Activated naive CD8-positive, alpha-beta T cell treated with anti-CD3 and anti-CD28 coated beads, Interleukin-2, amount 10 ng/mL, durations not matched to agents 7 days and 5 days (primary cell): ENCODE measurements at regions of chrX and their contacts with region 1.

Region 1: GRCh38 chrX:71181910-71182799 is 37.5 kb downstream of the NLGN3 start:
- DNase-seq: peak; percentile 69
- ATAC-seq: peak; percentile 94
- H3K4me3 Mint-ChIP-seq: peak overlapping the region; percentile 90
- H3K27ac Mint-ChIP-seq: peak overlapping the region; percentile 97
- H3K4me1 Mint-ChIP-seq: peaks cover 16% of the 10 kb centered on the region
- H3K27me3 Mint-ChIP-seq: no peaks in the 10 kb centered on the region

Region 2: DNA sequence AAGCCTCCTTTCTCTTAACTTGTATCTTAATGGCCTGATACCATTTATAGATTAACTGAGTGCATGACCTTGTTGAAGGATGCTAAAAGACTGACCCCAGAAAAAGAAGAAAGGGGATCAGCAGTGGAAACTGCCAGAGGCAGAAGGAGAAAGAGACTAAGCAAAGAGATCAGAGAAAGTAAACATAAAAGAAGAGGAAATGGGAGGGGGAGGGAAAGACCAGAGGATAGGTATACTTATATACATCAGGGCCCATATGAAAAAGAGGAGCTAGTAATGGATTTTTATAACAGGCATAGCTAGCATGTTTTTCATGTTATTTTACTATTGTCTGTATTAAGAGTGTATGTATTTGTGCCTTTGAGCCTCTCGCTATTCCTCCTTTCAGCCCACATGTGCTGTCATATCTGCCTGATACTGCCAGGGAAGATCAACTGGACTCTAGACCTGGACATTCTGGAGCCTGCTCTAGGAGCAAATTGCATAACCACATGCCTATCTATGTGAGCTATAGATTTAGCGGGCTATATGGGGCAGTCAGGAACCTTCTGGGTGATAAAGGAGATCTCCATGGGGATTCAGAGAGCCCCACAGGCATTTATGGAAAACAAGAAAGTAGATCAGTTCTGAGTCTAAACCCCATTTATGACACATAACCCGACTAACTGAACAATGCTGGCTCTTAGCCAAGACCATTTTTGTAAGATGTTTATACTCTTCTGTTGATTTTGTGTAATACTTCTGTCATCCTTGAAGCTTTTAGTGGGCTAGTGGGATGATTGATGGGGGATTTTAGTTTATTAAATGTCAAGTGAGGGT is 100.6 kb before region 1 on chrX:
- POLR2A ChIA-PET with region 1: no interaction called
- DNase-seq: no peak
- ATAC-seq: no peak
- H3K4me3 Mint-ChIP-seq: no peak overlapping the region
- H3K27ac Mint-ChIP-seq: no peak overlapping the region
- H3K4me1 Mint-ChIP-seq: peaks cover 3% of the 10 kb centered on the region
- H3K27me3 Mint-ChIP-seq: no peaks in the 10 kb centered on the region

Region 3: DNA sequence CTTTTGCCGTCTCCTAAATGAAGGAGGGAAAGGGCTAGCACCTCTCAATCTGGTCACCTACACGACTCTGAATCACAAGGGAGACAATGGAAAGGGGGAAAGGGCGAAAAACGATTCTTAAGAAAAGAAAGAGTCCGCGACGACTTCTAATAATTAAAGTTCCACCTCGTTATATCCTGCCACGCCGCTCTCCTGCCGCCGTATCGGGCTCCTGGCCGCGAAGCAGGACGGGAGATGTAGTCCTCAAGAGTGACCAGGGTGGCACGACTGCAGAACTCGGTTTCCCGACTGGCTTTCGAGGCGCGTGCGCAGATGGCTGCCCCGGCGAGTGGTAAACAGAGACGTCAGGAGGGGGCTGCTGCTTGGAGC is 86.6 kb before region 1 on chrX and contains the start of gene FOXO4:
- POLR2A ChIA-PET with region 1: no interaction called
- DNase-seq: peak; percentile 85
- ATAC-seq: peak; percentile 92
- H3K4me3 Mint-ChIP-seq: peak within 1 kb of the TSS; percentile 90
- H3K27ac Mint-ChIP-seq: peak within 1 kb of the TSS; percentile 89
- H3K4me1 Mint-ChIP-seq: peaks cover 20% of the 10 kb centered on the region
- H3K27me3 Mint-ChIP-seq: no peaks in the 10 kb centered on the region
- total RNA-seq, gene FOXO4: 22.1 to 24.9 TPM

Region 4: GRCh38 chrX:71111141-71111843 is 70.9 kb before region 1 on chrX and contains the start of gene IL2RG:
- POLR2A ChIA-PET with region 1: interaction called, 17 read pairs
- DNase-seq: peak; percentile 53
- ATAC-seq: peak; percentile 80
- H3K4me3 Mint-ChIP-seq: peak within 1 kb of the TSS; percentile 99
- H3K27ac Mint-ChIP-seq: peak within 1 kb of the TSS; percentile 95
- H3K4me1 Mint-ChIP-seq: peaks cover 30% of the 10 kb centered on the region
- H3K27me3 Mint-ChIP-seq: no peaks in the 10 kb centered on the region
- total RNA-seq, gene IL2RG: 389 to 395 TPM

Region 5: DNA sequence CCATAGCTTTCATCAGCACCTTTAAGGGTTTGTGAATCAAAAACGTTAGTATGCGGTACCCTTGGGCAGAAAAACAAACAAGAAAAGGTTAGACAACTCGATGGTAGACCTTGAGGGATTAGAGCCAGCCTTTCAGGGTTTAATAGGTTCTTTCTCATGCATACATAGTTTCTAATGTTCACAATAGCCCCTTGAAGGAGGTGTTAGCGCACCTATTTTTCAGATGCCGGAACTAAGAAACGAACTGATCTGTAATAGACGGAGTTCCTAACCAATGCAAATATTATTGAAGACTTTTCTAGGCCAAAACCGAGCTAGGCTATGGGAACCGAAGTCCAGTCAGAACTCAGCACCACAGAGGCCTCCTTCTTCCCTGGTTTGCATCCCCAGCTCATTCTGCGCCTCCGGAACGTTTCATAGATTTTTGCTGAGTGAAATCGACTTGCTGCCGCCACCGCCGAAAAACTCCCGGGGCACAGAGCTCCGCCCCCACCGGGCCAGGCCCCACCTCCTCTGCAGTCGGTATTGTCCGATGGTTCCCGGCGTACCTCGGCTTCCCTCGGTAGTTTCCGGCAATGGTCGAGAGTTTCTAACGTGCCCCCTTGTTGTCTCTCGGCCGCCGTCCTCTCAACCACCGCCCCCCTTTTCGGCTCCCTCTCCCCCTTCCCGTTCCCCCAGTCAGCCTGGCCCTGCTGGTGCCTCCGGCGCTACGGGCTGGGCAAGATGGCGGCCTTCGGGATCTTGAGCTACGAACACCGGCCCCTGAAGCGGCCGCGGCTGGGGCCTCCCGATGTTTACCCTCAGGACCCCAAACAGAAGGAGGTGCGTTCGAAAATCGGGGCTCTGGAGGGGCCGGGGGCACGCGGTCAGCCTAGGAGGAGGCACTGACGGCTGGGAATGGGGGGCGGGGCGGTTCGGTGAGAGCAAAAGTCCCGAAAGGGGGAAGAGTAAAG is 63.8 kb before region 1 on chrX and contains the start of gene MED12:
- POLR2A ChIA-PET with region 1: interaction called, 10 read pairs
- DNase-seq: peak; percentile 83
- ATAC-seq: peak; percentile 93
- H3K4me3 Mint-ChIP-seq: peak within 1 kb of the TSS; percentile 82
- H3K27ac Mint-ChIP-seq: peak within 1 kb of the TSS; percentile 86
- H3K4me1 Mint-ChIP-seq: peaks cover 14% of the 10 kb centered on the region
- H3K27me3 Mint-ChIP-seq: no peaks in the 10 kb centered on the region
- total RNA-seq, gene MED12: 64.7 to 77.1 TPM

Region 6: GRCh38 chrX:71144651-71145050 is 37.5 kb before region 1 on chrX and contains the start of gene NLGN3:
- POLR2A ChIA-PET with region 1: no interaction called
- DNase-seq: no peak
- ATAC-seq: no peak
- H3K4me3 Mint-ChIP-seq: no peak within 1 kb of the TSS
- H3K27ac Mint-ChIP-seq: peak within 1 kb of the TSS; percentile 55
- H3K4me1 Mint-ChIP-seq: peaks cover 7% of the 10 kb centered on the region
- H3K27me3 Mint-ChIP-seq: no peaks in the 10 kb centered on the region
- total RNA-seq, gene NLGN3: 1.4 to 1.9 TPM

Region 7: GRCh38 chrX:71198066-71198465 is 15.9 kb after region 1 on chrX:
- POLR2A ChIA-PET with region 1: interaction called, 48 read pairs
- DNase-seq: no peak
- ATAC-seq: peak; percentile 47
- H3K4me3 Mint-ChIP-seq: peak overlapping the region; percentile 84
- H3K27ac Mint-ChIP-seq: peak overlapping the region; percentile 95
- H3K4me1 Mint-ChIP-seq: peaks cover 10% of the 10 kb centered on the region
- H3K27me3 Mint-ChIP-seq: no peaks in the 10 kb centered on the region

Region 8: GRCh38 chrX:71254092-71254941 is 72.2 kb after region 1 on chrX and contains the start of gene ZMYM3:
- POLR2A ChIA-PET with region 1: interaction called, 14 read pairs
- DNase-seq: peak; percentile 79
- ATAC-seq: peak; percentile 90
- H3K4me3 Mint-ChIP-seq: peak within 1 kb of the TSS; percentile 90
- H3K27ac Mint-ChIP-seq: peak within 1 kb of the TSS; percentile 94
- H3K4me1 Mint-ChIP-seq: peaks cover 18% of the 10 kb centered on the region
- H3K27me3 Mint-ChIP-seq: no peaks in the 10 kb centered on the region
- total RNA-seq, gene ZMYM3: 38.9 to 39.3 TPM

Region 9: GRCh38 chrX:71283403-71284143 is 101.4 kb after region 1 on chrX and contains the start of gene NONO:
- POLR2A ChIA-PET with region 1: interaction called, 24 read pairs
- DNase-seq: peak; percentile 75
- ATAC-seq: peak; percentile 85
- H3K4me3 Mint-ChIP-seq: peak within 1 kb of the TSS; percentile 93
- H3K27ac Mint-ChIP-seq: peak within 1 kb of the TSS; percentile 99
- H3K4me1 Mint-ChIP-seq: peaks cover 18% of the 10 kb centered on the region
- H3K27me3 Mint-ChIP-seq: no peaks in the 10 kb centered on the region
- total RNA-seq, gene NONO: 438 to 466 TPM

Region 10: DNA sequence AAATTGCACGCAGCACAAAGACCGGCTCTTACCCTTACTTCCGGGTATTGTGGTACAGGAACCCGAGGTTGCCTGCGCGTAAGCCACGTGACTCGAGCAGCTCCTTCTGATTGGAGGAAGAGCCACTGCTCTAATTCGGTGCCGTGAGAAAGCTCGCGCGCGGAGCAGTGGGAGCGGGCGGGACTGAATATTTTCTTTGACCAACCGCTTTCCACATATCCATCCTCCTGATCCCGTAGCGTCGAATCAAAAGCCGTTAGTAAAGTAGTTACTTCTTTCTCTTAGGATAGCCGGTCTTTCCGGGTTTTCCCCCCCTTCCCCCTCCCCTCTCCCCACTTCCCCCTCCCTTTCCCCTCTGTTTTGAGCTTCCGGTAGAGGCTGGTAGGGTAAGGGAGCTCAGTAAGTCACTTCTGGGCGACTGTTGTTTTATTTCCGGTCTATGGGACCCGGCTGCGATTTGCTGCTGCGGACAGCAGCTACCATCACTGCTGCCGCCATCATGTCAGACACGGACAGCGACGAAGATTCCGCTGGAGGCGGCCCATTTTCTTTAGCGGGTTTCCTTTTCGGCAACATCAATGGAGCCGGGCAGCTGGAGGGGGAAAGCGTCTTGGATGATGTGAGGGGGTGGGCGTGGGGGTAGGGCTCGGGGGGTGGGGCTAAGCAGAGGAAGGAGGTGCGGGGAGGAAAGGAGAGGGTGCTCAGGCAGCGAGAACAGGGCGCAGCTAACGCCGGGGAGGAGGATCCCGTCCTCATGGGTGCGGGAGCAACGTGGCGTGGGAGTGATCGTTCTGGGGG is 183.9 kb after region 1 on chrX and contains the start of gene TAF1:
- POLR2A ChIA-PET with region 1: interaction called, 16 read pairs
- DNase-seq: peak; percentile 81
- ATAC-seq: peak; percentile 93
- H3K4me3 Mint-ChIP-seq: peak within 1 kb of the TSS; percentile 97
- H3K27ac Mint-ChIP-seq: peak within 1 kb of the TSS; percentile 98
- H3K4me1 Mint-ChIP-seq: peaks cover 13% of the 10 kb centered on the region
- H3K27me3 Mint-ChIP-seq: no peaks in the 10 kb centered on the region
- total RNA-seq, gene TAF1: 64.7 to 66.8 TPM